AG04449 (cell line): ENCODE measurements at regions of chr19 and their contacts with region 1.

Region 1: DNA sequence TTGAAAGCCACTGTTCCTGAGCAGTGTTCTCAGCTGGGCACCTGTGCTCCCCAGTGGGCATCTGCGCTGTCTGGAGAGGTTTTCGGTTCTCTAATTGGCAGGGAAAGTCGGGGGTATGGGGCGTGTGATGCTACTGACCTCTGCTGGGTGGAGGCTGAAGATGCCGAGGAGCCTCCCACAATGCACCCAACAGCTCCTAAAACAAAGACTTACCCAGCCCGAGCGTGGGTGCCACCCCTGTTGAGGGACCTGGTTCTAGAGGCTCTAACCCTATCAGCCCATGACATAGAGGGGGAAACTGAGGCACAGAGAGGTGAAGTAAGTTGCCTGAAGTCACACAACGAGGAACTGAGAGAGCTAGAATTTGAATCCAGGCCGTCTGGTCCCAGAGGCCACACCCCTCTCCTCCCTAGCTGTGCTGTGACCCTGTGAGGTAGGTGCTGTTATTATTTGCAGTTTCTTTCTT is 2.3 kb downstream of the SPACA4 start:
- DNase-seq: no peak
- H3K4me3 ChIP-seq: no peak overlapping the region
- CTCF ChIP-seq: peak; percentile 66

Region 2: GRCh38 chr19:48582168-48582567 is 26.7 kb before region 1 on chr19:
- CTCF ChIA-PET with region 1: interaction called, 12 read pairs
- POLR2A ChIA-PET with region 1: no interaction called
- DNase-seq: no peak
- H3K4me3 ChIP-seq: no peak overlapping the region
- CTCF ChIP-seq: no peak

Region 3: GRCh38 chr19:48618916-48619691 is 10.3 kb after region 1 on chr19 and contains the starts of genes RPL18 and SPHK2:
- CTCF ChIA-PET with region 1: interaction called, 27 read pairs
- POLR2A ChIA-PET with region 1: interaction called, 28 read pairs
- DNase-seq: peak; percentile 99
- H3K4me3 ChIP-seq: peak within 1 kb of the TSS; percentile 97
- CTCF ChIP-seq: no peak

Region 4: DNA sequence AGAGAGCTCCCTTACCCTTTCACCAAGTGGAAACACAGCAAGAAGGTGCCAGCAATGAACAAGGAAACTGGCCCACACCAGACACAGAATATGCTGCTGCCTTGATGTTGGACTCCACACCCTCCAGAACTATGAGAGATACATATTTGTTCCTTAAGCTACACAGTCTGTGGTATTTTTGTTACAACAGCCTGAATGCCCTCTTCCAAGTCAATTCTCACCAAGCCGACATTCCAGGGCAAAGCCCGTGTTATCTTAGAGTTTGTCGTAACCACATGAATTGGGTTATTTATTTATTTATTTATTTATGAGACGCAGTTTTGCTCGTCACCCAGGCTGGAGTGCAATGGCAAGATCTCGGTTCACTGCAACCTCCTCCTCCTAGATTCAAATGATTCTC is 161.4 kb after region 1 on chr19:
- CTCF ChIA-PET with region 1: no interaction called
- POLR2A ChIA-PET with region 1: no interaction called
- DNase-seq: peak; percentile 83
- H3K4me3 ChIP-seq: no peak overlapping the region
- CTCF ChIP-seq: no peak

Region 5: GRCh38 chr19:48933382-48933932 is 324.6 kb after region 1 on chr19 and contains the start of gene DHDH:
- CTCF ChIA-PET with region 1: no interaction called
- POLR2A ChIA-PET with region 1: no interaction called
- DNase-seq: no peak
- H3K4me3 ChIP-seq: peak within 1 kb of the TSS; percentile 65
- CTCF ChIP-seq: no peak